PC-3 (cell line): ENCODE measurements at regions of chr2 and their contacts with region 1.

Region 1: GRCh38 chr2:120503793-120504571 is 158.0 kb downstream of the INHBB start:
- DNase-seq: peak; percentile 67
- ATAC-seq: peak; percentile 85
- H3K4me3 ChIP-seq: no peak overlapping the region
- H3K27ac ChIP-seq: peak overlapping the region; percentile 18; the same call in 1 of the 2 replicates
- H3K4me1 ChIP-seq: peaks cover 21% of the 10 kb centered on the region
- H3K27me3 ChIP-seq: no peaks in the 10 kb centered on the region
- CTCF ChIP-seq: no peak

Region 2: GRCh38 chr2:120323214-120323613 is 180.8 kb before region 1 on chr2:
- CTCF ChIA-PET with region 1: no interaction called
- POLR2A ChIA-PET with region 1: no interaction called
- intact Hi-C with region 1: no loop called
- DNase-seq: no peak
- ATAC-seq: no peak
- H3K4me3 ChIP-seq: no peak overlapping the region
- H3K27ac ChIP-seq: no peak overlapping the region
- H3K4me1 ChIP-seq: no peaks in the 10 kb centered on the region
- H3K27me3 ChIP-seq: no peaks in the 10 kb centered on the region
- CTCF ChIP-seq: no peak

Region 3: DNA sequence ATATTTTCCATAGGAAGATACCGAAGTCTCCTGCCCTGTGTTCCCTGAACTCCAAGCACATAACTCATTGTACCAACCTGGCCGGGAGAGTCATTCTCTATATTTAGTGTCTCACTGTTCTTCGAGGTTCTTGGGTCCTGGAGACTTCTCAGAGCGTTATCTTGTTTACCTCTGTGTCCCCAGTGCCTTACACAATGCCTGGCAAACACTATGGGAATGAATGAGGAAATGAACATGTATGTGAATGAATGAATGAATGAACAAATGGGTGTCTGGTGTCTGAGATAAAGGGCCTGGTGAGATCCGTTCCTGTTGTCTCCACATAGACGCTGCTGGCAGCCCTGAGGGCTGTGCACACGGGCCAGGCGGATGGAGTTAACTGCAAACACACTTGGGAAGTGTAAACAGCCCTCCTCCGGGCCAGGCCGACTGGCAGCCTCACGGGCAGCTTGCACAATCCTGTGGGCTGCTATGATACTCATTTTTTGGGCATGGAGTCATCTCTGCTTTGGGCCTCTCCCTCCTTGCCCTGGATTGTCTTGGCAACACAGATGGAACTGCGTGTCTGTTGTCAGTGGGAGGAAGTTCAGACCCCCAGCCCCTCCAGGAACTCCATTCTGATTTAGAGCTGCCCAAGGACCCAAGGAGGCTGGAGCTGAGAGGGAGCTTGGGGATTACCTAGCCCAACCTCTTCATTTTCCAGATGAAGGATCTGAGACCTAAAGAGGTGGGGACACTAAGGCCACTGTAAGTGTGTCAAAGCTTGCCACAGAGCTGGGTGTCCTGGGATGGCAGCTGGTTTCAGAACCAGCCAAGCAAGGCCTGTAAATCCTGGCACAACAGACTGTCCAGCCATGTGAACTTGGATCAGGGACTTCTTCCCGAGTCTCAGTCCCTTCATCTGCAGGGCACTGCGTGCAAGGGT is 33.7 kb before region 1 on chr2:
- CTCF ChIA-PET with region 1: no interaction called
- POLR2A ChIA-PET with region 1: no interaction called
- intact Hi-C with region 1: loop called (anchors 1 kb)
- DNase-seq: peak; percentile 97
- ATAC-seq: peak; percentile 80
- H3K4me3 ChIP-seq: no peak overlapping the region
- H3K27ac ChIP-seq: peak overlapping the region; percentile 83
- H3K4me1 ChIP-seq: peaks cover 55% of the 10 kb centered on the region
- H3K27me3 ChIP-seq: no peaks in the 10 kb centered on the region
- CTCF ChIP-seq: no peak